Mammary epithelial cell (primary cell): ENCODE measurements at regions of chr13 and their contacts with region 1.

Region 1: GRCh38 chr13:110306960-110307746 is at the starts of genes COL4A1 and COL4A2:
- DNase-seq: peak; percentile 75
- H3K4me3 ChIP-seq: peak within 1 kb of the TSS; percentile 66 to 73 (median 68)
- H3K27ac ChIP-seq: peak within 1 kb of the TSS; percentile 53
- H3K4me1 ChIP-seq: peaks cover 55% of the 10 kb centered on the region
- H3K27me3 ChIP-seq: no peaks in the 10 kb centered on the region
- CTCF ChIP-seq: no peak
- total RNA-seq, gene COL4A1: 40.9 to 89.0 TPM
- total RNA-seq, gene COL4A2: 74.9 to 94.2 TPM

Region 2: GRCh38 chr13:110250258-110250891 is 56.8 kb before region 1 on chr13:
- CTCF ChIA-PET with region 1: no interaction called
- dilution Hi-C with region 1: no loop called
- in situ Hi-C with region 1: no loop called
- intact Hi-C with region 1: loop called (anchors 1 kb)
- DNase-seq: peak; percentile 55
- H3K4me3 ChIP-seq: no peak overlapping the region
- H3K27ac ChIP-seq: no peak overlapping the region
- H3K4me1 ChIP-seq: peaks cover 14% of the 10 kb centered on the region
- H3K27me3 ChIP-seq: no peaks in the 10 kb centered on the region
- CTCF ChIP-seq: no peak

Region 3: GRCh38 chr13:110319774-110320509 is 12.8 kb after region 1 on chr13:
- CTCF ChIA-PET with region 1: interaction called, 3 read pairs
- dilution Hi-C with region 1: no loop called
- in situ Hi-C with region 1: no loop called
- intact Hi-C with region 1: loop called (anchors 1 kb)
- DNase-seq: peak; percentile 78
- H3K4me3 ChIP-seq: peak overlapping the region; percentile 35 to 44 (median 38)
- H3K27ac ChIP-seq: peak overlapping the region; percentile 70
- H3K4me1 ChIP-seq: peaks cover 17% of the 10 kb centered on the region
- H3K27me3 ChIP-seq: no peaks in the 10 kb centered on the region
- CTCF ChIP-seq: no peak

Region 4: DNA sequence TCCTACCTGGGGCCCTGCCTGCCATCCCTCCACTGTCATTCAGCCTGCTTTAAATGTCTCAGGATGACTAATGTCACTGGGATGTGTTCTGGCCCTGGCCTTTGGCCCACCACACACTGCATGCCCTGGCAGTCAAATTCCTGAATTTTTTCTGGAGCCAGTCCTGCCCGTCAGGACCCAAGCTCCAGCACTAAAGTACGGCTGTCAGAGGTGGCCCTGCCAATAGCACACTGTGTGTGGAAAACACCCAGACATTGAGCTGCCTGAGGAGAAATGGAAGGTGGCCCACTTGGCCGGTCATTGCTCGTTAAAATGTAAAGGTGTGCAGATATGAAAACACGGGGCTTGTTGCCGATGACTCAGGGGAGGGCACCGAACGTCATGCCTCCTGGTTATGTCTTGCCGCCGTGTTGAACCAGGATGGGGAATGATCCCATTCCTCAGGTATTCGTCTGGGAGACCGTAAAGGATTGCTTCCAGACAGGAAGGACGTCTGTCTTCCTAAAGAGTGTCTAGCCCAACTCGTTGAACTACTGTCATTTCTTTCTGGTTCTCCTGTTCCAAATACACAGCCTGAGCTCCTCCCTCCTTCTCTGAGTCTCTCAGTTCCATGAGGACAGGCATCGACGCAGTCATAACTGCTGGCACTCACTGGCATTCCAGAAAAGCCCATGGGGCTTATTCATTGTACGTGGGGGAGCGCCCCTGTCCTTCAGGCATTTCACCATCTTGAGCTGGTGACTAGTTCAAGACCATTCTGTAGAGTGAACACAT is 40.6 kb after region 1 on chr13:
- CTCF ChIA-PET with region 1: no interaction called
- dilution Hi-C with region 1: no loop called
- in situ Hi-C with region 1: no loop called
- intact Hi-C with region 1: loop called (anchors 1 kb)
- DNase-seq: peak; percentile 99
- H3K4me3 ChIP-seq: no peak overlapping the region
- H3K27ac ChIP-seq: peak overlapping the region; percentile 74
- H3K4me1 ChIP-seq: peaks cover 62% of the 10 kb centered on the region
- H3K27me3 ChIP-seq: no peaks in the 10 kb centered on the region
- CTCF ChIP-seq: no peak